Sigmoid colon (tissue), 7 donors: ENCODE measurements at regions of chr1 and their contacts with region 1.

Region 1: DNA sequence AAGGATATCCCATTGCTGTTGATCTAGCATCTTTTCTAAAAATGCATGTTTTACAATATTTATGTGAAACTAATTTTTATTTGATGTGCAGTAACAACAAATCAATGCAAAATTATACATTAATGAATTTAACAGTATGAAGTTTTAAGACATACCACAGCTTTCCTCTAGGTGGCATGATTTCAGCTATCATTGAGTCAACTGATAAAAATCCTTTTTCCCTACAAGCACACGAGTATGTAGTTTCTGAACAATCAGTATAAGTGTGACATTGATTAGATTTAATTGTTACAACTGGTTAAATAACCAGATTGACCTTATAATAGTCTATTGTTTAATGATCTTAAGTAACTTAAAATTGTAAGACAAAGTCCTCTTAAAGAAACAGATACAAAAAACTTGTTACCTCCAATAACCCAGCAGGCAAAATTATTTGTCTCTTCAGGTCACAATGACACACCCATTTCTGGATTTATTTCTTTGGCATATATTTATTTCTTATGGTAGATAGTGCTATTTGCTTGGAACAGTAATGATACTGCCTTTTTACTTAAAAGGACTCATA is 5.8 kb upstream of the TGFB2 start:
- DNase-seq: no peak
- H3K4me3 ChIP-seq: no peak overlapping the region
- H3K27ac ChIP-seq: no peak overlapping the region
- H3K4me1 ChIP-seq: peaks cover 0 to 5% (median 2%) of the 10 kb centered on the region in 4 donors
- H3K27me3 ChIP-seq: no peaks in the 10 kb centered on the region
- CTCF ChIP-seq: peak; percentile 32 to 72 (median 68)
- EP300 ChIP-seq: no peak
- POLR2A ChIP-seq: no peak

Region 2: GRCh38 chr1:218024211-218024720 is 315.1 kb before region 1 on chr1:
- intact Hi-C with region 1: no loop called
- DNase-seq: no peak
- H3K4me3 ChIP-seq: no peak overlapping the region
- H3K27ac ChIP-seq: no peak overlapping the region
- H3K4me1 ChIP-seq: no peaks in the 10 kb centered on the region
- H3K27me3 ChIP-seq: no peaks in the 10 kb centered on the region
- CTCF ChIP-seq: no peak
- EP300 ChIP-seq: no peak
- POLR2A ChIP-seq: no peak

Region 3: DNA sequence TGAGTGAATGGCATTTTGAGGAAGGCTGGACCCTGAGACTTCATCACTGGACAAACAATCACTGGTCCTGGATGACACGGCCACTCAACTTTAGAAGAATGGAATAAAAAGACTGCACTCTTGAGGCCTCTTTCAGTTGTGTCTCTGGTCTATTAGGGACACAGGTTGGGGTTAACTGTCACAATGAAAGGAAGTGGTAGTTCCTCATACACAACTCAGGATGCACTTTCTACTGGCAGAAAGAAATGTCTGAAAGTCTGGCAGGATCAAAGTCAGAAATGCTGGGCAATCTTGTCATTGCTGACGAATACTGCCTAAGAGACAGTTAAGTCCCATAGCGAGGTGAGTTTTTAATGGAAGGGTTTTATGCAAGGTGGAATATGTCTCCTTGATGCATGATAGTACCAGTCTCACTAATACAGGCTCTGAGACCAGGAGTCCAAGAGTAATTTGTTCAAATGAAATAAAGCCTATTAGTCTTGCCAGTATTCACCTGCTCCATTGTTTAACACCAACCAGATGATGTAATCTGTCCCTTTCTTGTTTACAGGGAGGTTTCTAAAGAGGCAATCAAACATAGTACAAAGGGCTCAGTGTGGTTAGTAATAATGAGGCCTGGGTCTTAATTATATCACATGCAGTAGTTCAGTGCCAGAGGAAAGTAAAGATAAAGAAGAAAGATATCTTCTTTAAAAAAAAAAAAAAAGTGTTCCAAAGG is 65.4 kb before region 1 on chr1:
- intact Hi-C with region 1: no loop called
- DNase-seq: no peak
- H3K4me3 ChIP-seq: no peak overlapping the region
- H3K27ac ChIP-seq: no peak overlapping the region
- H3K4me1 ChIP-seq: no peaks in the 10 kb centered on the region
- H3K27me3 ChIP-seq: no peaks in the 10 kb centered on the region
- CTCF ChIP-seq: no peak
- EP300 ChIP-seq: no peak
- POLR2A ChIP-seq: no peak

Region 4: DNA sequence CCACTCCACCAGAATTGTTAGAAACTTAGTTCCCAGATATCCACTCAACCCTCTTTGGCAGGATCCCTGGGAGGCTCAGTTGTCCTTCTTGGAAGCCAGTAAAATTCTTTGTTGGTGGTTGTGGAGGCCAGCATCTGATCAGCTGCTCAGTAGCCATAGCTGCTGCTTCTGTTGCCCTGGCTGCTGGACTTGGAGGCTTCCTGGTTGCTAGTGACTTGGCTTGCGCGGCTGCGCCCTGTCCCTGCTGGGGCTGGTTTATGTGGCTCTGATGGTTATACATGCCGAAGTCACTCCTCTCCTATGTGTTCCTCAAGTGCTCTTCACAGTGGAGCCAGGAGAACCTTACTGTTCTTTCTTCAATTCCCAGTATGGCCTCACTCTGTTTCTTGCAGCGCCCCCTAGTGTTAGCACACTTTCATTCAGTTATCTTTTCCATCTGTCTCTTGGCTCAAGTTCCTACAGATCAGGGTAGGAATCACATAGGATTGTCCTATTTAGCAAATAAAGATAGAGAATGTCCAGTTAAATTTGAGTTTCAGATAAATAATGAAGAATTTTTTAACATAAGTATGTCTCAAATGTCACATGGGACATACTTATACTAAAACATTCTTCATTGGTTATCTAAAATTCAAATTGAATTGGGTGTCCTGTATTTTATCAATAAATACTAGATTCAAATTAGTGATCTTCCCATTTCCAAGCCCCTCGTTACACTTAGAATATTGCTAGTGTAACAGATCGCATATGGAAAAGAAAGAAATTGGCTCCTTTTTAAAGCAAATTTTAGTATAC is 182.2 kb after region 1 on chr1:
- intact Hi-C with region 1: loop called (anchors 2 kb)
- DNase-seq: peak; percentile 76
- H3K4me3 ChIP-seq: no peak overlapping the region
- H3K27ac ChIP-seq: no peak overlapping the region
- H3K4me1 ChIP-seq: peaks cover 0 to 8% (median 0%) of the 10 kb centered on the region in 4 donors
- H3K27me3 ChIP-seq: no peaks in the 10 kb centered on the region
- CTCF ChIP-seq: peak; percentile 54 to 65 (median 63)
- EP300 ChIP-seq: no peak
- POLR2A ChIP-seq: no peak

Region 5: GRCh38 chr1:219566951-219567947 is 1227.9 kb after region 1 on chr1:
- intact Hi-C with region 1: loop called (anchors 5 kb)
- DNase-seq: no peak
- H3K4me3 ChIP-seq: no peak overlapping the region
- H3K27ac ChIP-seq: no peak overlapping the region
- H3K4me1 ChIP-seq: peaks cover 0 to 6% (median 2%) of the 10 kb centered on the region in 4 donors
- H3K27me3 ChIP-seq: no peaks in the 10 kb centered on the region
- CTCF ChIP-seq: peak in 2 of 4 experiments; percentile 39 to 43
- EP300 ChIP-seq: no peak
- POLR2A ChIP-seq: no peak